ENCODE measurements at regions of chr7 and their contacts with region 1.

Region 1: DNA sequence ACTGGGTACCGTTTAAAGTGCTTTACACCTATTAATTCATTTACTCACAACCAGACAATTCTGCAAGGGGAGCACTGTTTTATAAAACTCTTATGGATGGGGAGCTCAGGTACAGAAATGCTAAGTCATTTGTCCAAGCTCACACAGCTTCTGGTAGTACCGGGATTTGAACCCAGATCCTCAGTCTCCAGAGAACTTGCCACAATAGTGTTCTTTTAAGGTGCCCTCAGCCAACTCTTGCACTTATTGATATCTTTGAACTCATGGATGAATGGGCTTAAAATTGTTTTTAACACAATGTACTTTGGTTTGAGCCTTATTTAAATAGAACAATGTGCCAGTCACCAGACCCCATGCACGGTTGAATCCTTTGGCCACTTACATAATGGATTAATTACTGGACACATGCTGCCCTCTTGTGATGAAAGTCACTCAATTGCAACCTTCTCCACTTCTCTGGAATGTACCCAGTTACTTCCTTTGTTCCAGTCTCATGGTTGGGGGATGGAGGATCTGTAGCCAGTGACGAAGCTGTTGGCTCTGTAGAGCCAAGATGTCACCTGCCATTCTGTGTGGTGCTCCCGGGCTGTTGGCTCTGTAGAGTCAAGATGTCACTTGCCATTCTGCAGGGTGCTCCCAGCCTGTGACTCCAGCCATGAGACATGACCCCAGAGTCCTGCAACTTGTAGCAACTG is 65.6 kb downstream of the NOD1 start:
- DNase-seq: no peak
- ATAC-seq: peak; percentile 91 to 95

Region 2: DNA sequence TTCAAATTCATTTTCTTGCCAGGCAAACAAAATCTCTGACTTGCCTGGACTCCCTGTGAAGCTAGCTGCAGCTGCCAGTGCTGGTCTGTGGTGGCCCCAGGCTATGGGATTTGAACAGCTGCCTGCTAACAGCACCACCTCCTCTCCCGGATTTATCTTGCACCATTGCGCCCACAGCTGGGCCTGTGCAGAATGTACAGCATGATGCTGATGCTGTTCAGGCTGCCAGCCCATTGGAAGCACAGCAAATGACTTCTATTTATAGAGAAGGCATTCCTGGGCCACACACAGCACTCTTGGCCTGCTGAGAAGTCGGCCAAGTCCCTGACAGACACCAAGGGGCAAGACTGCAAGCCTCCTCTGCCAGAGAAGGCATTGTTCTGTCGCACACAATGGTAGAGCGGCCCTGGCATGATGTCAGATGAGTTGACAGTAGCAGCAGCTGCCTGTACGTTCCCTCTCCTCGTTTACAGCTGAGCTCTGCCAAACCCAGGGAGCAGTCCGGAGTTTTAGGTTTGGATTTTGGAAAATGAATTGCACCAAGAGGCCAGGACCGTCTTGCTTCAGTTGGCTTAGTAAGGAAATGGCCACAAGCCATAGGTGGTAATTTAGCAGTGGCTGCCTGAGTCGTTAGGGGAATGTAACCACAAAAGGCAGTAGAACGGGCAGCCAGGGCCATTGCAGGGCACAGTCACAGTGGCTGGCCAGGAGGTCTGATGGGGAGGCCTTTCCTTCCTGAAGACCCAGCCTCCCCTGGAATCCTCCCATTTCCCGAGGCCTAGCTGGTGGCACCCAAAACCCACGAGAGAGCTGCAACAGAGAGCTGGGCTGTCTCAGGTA is 239.7 kb before region 1 on chr7:
- intact Hi-C with region 1: loop called in 1 of 2 experiments (anchors 5 kb)
- DNase-seq: peak; percentile 65
- ATAC-seq: peak; percentile 71 to 78

Region 3: DNA sequence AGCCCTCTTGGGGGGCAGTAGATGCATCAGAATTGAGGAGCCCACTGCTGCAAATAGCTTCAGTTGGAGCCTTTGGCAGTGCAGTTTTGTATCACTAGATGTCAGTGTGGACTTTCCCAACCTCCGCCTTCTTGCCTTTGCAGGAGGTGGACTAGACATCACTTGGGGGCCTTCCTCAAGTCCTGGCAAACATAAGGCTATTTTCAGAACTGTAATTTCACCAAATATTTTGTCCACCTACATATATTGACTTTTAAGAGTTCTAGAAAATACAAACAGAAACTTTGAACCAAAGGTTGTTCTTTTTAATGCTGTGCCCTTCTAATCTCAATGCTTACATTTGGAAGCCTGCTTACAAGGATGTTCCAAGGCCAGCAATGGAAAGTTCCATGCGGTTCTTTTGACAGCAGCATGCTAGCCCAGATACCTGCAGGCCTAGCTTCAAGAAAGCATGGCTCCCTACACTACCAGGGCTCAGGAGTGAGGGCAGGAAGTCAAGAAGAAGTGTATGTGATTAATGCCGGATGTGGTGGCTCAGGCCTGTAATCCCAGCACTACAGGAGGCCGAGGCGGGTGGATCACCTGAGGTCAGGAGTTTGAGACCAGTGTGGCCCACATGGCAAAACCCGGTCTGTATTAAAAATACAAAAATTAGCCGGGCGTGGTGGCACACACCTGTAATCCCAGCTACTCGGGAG is 136.6 kb before region 1 on chr7:
- intact Hi-C with region 1: loop called in 1 of 2 experiments (anchors 5 kb)
- DNase-seq: no peak
- ATAC-seq: peak; percentile 61 to 70

Measured in left cardiac atrium (tissue), 4 donors.